ENCODE measurements at regions of chr5 and their contacts with region 1.

Region 1: GRCh38 chr5:42881416-42882117 is 69.9 kb upstream of the SELENOP start:
- DNase-seq: no peak
- H3K4me3 ChIP-seq: no peak overlapping the region
- H3K27ac ChIP-seq: no peak overlapping the region
- H3K4me1 ChIP-seq: peaks cover 5% of the 10 kb centered on the region
- H3K27me3 ChIP-seq: no peaks in the 10 kb centered on the region
- CTCF ChIP-seq: no peak

Region 2: GRCh38 chr5:42784132-42784531 is 97.4 kb before region 1 on chr5:
- intact Hi-C with region 1: no loop called
- DNase-seq: no peak
- H3K4me3 ChIP-seq: no peak overlapping the region
- H3K27ac ChIP-seq: no peak overlapping the region
- H3K4me1 ChIP-seq: no peaks in the 10 kb centered on the region
- H3K27me3 ChIP-seq: no peaks in the 10 kb centered on the region
- CTCF ChIP-seq: no peak

Region 3: DNA sequence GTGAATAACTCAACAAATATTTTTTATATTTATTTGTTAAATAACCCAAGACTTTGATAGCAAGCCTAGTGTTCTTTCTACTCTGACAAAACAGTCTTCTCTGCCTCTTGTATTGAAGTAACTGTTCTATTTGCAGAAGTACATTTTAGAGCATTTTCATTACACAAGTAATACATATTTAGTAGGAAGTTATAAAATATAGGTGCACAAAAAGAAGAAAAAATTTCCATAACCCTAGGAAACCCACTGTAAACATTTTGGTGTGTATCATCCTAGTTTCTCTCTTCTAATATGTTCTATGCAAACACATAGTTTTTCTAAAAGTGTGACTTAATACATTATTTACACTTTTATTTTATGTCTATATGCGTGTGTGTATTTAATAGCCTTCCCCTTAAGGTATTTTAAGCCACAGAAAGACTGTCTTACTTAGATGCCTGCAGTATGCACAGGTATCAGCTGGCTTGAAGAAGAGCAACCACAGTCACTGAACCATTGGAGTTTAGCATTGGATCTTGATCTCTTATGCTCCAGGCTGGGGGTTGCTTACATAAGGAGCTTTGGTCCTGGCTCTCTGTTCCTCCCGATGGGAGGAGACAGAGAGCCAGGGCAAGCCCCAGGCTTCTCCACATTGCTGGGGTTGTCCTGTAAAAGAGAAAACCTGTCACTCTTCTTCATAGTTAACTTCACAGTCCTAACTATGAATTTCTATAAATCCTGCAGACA is 73.7 kb before region 1 on chr5:
- intact Hi-C with region 1: loop called (anchors 5 kb)
- DNase-seq: no peak
- H3K4me3 ChIP-seq: peak overlapping the region; percentile 70
- H3K27ac ChIP-seq: peak overlapping the region; percentile 95
- H3K4me1 ChIP-seq: peaks cover 64% of the 10 kb centered on the region
- H3K27me3 ChIP-seq: no peaks in the 10 kb centered on the region
- CTCF ChIP-seq: peak; percentile 37

Region 4: DNA sequence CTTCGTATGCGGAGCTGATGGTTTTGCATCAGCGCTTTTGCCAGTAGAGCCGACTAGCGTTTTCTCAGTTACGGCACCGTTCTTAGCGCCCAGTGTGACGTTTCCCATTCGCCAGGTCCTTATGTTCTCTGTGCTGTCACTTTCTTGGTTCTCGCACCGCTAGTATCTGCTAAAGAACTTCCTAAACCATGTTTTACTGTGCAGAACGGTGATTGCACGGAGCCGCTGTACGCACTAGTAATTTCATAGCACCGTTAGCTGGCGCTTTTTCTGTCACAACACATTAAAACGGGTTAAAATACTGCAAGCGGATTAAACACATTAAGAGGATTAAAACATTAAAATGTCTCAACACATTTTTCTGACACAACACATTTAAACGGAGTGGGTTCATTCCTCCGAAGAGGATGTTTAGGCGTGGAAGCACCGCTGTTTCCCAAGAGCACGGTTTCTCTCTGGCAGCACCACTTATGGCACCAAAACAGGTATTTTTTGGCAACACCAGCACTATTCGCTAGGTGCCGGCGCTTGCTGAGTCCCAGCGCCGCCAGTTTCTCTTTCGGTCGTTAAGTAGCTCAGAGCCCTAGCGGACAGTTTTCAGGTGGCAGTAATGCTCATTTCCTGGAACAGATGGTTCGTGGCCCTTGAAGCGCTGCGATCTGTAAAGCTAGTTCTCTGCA is 138.2 kb after region 1 on chr5:
- intact Hi-C with region 1: no loop called
- DNase-seq: no peak
- H3K4me3 ChIP-seq: peak overlapping the region; percentile 73
- H3K27ac ChIP-seq: peak overlapping the region; percentile 97
- H3K4me1 ChIP-seq: peaks cover 26% of the 10 kb centered on the region
- H3K27me3 ChIP-seq: peaks cover 99% of the 10 kb centered on the region
- CTCF ChIP-seq: peak; percentile 59